CD8-positive, alpha-beta T cell (primary cell): ENCODE measurements at regions of chr19 and their contacts with region 1.

Region 1: GRCh38 chr19:45643024-45643926 is 4.1 kb upstream of the EML2 start:
- DNase-seq: peak; percentile 80 to 95 (median 88)
- ATAC-seq: peak; percentile 32
- H3K4me3 ChIP-seq: peak overlapping the region in 1 of 2 experiments; percentile 53
- H3K4me3 Mint-ChIP-seq: peak overlapping the region; percentile 53
- H3K27ac ChIP-seq: peak overlapping the region in 1 of 2 experiments; percentile 93
- H3K27ac Mint-ChIP-seq: peak overlapping the region; percentile 75
- H3K4me1 ChIP-seq: peaks cover 46% of the 10 kb centered on the region
- H3K4me1 Mint-ChIP-seq: peaks cover 43% of the 10 kb centered on the region
- H3K27me3 ChIP-seq: no peaks in the 10 kb centered on the region
- H3K27me3 Mint-ChIP-seq: peaks cover 3% of the 10 kb centered on the region
- CTCF ChIP-seq: peak; percentile 96

Region 2: DNA sequence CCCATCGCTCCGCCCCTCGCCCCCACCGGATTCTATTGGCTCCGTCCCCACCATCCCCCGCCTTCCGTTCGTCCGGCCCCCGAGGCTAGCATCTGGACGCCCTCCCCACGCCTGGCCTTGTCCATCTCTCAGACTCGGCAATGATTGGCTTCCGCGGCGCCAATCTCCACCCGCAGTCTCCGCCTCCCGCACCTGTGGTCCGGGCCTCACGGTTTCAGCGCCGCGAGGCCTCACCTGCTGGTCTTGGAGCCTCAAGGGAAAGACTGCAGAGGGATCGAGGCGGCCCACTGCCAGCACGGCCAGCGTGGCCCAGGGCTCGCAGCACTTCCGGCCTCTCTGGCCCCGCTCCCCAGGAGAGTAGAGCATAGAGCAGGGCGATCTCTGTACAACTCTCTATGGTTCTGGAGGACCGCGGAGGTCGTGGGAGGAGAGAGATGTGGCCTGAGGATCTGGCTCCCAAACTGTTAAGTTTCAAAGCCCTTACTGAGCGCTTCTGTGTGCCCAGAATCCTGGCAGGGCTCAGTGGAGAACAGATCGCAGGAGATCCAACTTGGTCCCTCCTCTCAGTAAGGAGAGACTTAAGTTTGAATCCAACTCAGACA is 219.6 kb before region 1 on chr19 and contains the start of gene ERCC1:
- CTCF ChIA-PET with region 1: no interaction called
- POLR2A ChIA-PET with region 1: interaction called, 3 read pairs
- intact Hi-C with region 1: loop called in 1 of 2 experiments (anchors 1 kb)
- DNase-seq: peak in 6 of 9 experiments; percentile 35 to 84 (median 48)
- ATAC-seq: peak; percentile 57
- H3K4me3 ChIP-seq: peak within 1 kb of the TSS; percentile 72 to 95
- H3K4me3 Mint-ChIP-seq: peak within 1 kb of the TSS; percentile 93
- H3K27ac ChIP-seq: peak within 1 kb of the TSS; percentile 48 to 88
- H3K27ac Mint-ChIP-seq: peak within 1 kb of the TSS; percentile 90
- H3K4me1 ChIP-seq: peaks cover 32% of the 10 kb centered on the region
- H3K4me1 Mint-ChIP-seq: peaks cover 55% of the 10 kb centered on the region
- H3K27me3 ChIP-seq: no peaks in the 10 kb centered on the region
- H3K27me3 Mint-ChIP-seq: peaks cover 2% of the 10 kb centered on the region
- CTCF ChIP-seq: no peak
- total RNA-seq, gene ERCC1: 28.7 to 31.5 TPM

Region 3: DNA sequence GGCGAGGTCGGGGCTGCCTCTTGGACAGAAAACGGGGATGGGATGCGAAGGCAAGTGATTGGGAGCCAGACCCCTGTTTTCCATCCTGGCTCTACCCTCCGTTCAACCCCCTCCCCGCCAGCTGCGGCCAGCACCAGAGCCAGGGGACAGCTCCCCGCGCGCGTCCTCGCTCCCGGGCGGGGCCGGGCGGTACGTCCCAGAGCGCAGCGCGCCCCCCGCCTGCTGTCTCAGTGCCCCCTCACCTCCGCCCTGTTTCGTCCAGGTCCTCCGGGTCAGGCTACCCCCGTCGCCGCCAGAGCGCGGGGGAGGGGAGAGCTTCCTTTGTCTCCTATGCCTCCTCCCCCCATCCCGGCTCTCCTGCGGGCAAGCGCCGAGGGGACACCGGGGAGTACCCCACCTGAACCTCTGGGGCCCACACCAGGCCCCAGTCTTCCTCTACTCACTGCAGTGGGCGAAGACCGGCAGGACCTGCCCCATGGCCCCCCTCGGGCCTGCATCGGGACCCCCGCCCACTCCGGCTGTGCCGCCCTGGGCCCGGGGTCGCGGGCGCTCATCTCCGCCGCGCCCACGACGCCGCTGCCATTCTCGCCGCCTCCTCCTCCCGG is 146.8 kb before region 1 on chr19:
- CTCF ChIA-PET with region 1: interaction called, 22 read pairs
- POLR2A ChIA-PET with region 1: interaction called, 4 read pairs
- intact Hi-C with region 1: loop called in 1 of 2 experiments (anchors 2 kb)
- DNase-seq: peak in 6 of 9 experiments; percentile 37 to 68 (median 58)
- ATAC-seq: peak; percentile 16
- H3K4me3 ChIP-seq: peak overlapping the region; percentile 57 to 75
- H3K4me3 Mint-ChIP-seq: peak overlapping the region; percentile 74
- H3K27ac ChIP-seq: no peak overlapping the region
- H3K27ac Mint-ChIP-seq: no peak overlapping the region
- H3K4me1 ChIP-seq: peaks cover 45% of the 10 kb centered on the region
- H3K4me1 Mint-ChIP-seq: peaks cover 37% of the 10 kb centered on the region
- H3K27me3 ChIP-seq: peaks cover 0 to 4% of the 10 kb centered on the region in 2 experiments
- H3K27me3 Mint-ChIP-seq: peaks cover 21% of the 10 kb centered on the region
- CTCF ChIP-seq: no peak

Region 4: GRCh38 chr19:45564131-45564780 is 79.0 kb before region 1 on chr19:
- CTCF ChIA-PET with region 1: no interaction called
- POLR2A ChIA-PET with region 1: no interaction called
- intact Hi-C with region 1: no loop called
- DNase-seq: peak in 1 of 9 experiments; percentile 37
- ATAC-seq: no peak
- H3K4me3 ChIP-seq: peak overlapping the region in 1 of 2 experiments; percentile 20
- H3K4me3 Mint-ChIP-seq: peak overlapping the region; percentile 37
- H3K27ac ChIP-seq: peak overlapping the region; percentile 24 to 61
- H3K27ac Mint-ChIP-seq: peak overlapping the region; percentile 85
- H3K4me1 ChIP-seq: peaks cover 46% of the 10 kb centered on the region
- H3K4me1 Mint-ChIP-seq: peaks cover 40% of the 10 kb centered on the region
- H3K27me3 ChIP-seq: no peaks in the 10 kb centered on the region
- H3K27me3 Mint-ChIP-seq: no peaks in the 10 kb centered on the region
- CTCF ChIP-seq: no peak

Region 5: GRCh38 chr19:45584332-45585157 is 58.7 kb before region 1 on chr19 and contains the start of gene OPA3:
- CTCF ChIA-PET with region 1: interaction called, 11 read pairs
- POLR2A ChIA-PET with region 1: interaction called, 6 read pairs
- intact Hi-C with region 1: loop called in 1 of 2 experiments (anchors 1 kb)
- DNase-seq: peak; percentile 97 to 100 (median 99)
- ATAC-seq: peak; percentile 86
- H3K4me3 ChIP-seq: peak within 1 kb of the TSS; percentile 80 to 86
- H3K4me3 Mint-ChIP-seq: peak within 1 kb of the TSS; percentile 96
- H3K27ac ChIP-seq: peak within 1 kb of the TSS; percentile 95 to 99
- H3K27ac Mint-ChIP-seq: peak within 1 kb of the TSS; percentile 99
- H3K4me1 ChIP-seq: peaks cover 6% of the 10 kb centered on the region
- H3K4me1 Mint-ChIP-seq: peaks cover 19% of the 10 kb centered on the region
- H3K27me3 ChIP-seq: no peaks in the 10 kb centered on the region
- H3K27me3 Mint-ChIP-seq: peaks cover 7% of the 10 kb centered on the region
- CTCF ChIP-seq: no peak
- total RNA-seq, gene OPA3: 5.6 to 5.7 TPM

Region 6: GRCh38 chr19:45607071-45608029 is 35.9 kb before region 1 on chr19:
- CTCF ChIA-PET with region 1: interaction called, 105 read pairs
- POLR2A ChIA-PET with region 1: interaction called, 3 read pairs
- intact Hi-C with region 1: loop called (anchors 1 kb)
- DNase-seq: peak in 7 of 9 experiments; percentile 17 to 71 (median 55)
- ATAC-seq: peak; percentile 46
- H3K4me3 ChIP-seq: no peak overlapping the region
- H3K4me3 Mint-ChIP-seq: no peak overlapping the region
- H3K27ac ChIP-seq: peak overlapping the region in 1 of 2 experiments; percentile 0
- H3K27ac Mint-ChIP-seq: no peak overlapping the region
- H3K4me1 ChIP-seq: no peaks in the 10 kb centered on the region
- H3K4me1 Mint-ChIP-seq: peaks cover 9% of the 10 kb centered on the region
- H3K27me3 ChIP-seq: peaks cover 4 to 11% of the 10 kb centered on the region in 2 experiments
- H3K27me3 Mint-ChIP-seq: peaks cover 8% of the 10 kb centered on the region
- CTCF ChIP-seq: peak; percentile 84

Region 7: DNA sequence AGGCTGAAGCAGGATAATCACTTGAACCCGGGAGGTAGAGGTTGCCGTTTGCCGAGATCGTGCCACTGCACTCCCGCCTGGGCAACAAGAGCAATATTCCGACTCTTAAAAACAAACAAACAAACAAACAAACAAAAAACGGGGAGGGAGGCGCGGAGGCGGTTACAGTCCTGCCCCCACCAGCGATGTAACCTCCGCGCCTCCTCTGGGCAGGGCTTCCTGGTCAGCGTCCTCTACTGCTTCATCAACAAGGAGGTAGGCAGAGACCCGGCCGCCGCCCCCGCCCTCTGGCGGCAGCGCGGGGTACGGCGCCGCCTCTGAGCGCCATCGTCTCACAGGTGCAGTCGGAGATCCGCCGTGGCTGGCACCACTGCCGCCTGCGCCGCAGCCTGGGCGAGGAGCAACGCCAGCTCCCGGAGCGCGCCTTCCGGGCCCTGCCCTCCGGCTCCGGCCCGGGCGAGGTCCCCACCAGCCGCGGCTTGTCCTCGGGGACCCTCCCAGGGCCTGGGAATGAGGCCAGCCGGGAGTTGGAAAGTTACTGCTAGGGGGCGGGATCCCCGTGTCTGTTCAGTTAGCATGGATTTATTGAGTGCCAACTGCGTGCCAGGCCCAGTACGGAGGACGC is 38.2 kb after region 1 on chr19:
- CTCF ChIA-PET with region 1: interaction called, 24 read pairs
- POLR2A ChIA-PET with region 1: no interaction called
- intact Hi-C with region 1: loop called (anchors 1 to 2 kb)
- DNase-seq: peak; percentile 74 to 94 (median 85)
- ATAC-seq: peak; percentile 76
- H3K4me3 ChIP-seq: peak overlapping the region; percentile 34 to 50
- H3K4me3 Mint-ChIP-seq: peak overlapping the region; percentile 73
- H3K27ac ChIP-seq: no peak overlapping the region
- H3K27ac Mint-ChIP-seq: peak overlapping the region; percentile 49
- H3K4me1 ChIP-seq: peaks cover 17% of the 10 kb centered on the region
- H3K4me1 Mint-ChIP-seq: peaks cover 20% of the 10 kb centered on the region
- H3K27me3 ChIP-seq: peaks cover 0 to 4% of the 10 kb centered on the region in 2 experiments
- H3K27me3 Mint-ChIP-seq: no peaks in the 10 kb centered on the region
- CTCF ChIP-seq: peak; percentile 97

Region 8: GRCh38 chr19:46990991-46991676 is 1347.9 kb after region 1 on chr19:
- CTCF ChIA-PET with region 1: no interaction called
- POLR2A ChIA-PET with region 1: no interaction called
- intact Hi-C with region 1: no loop called
- DNase-seq: peak in 8 of 9 experiments; percentile 37 to 80 (median 65)
- ATAC-seq: peak; percentile 73
- H3K4me3 ChIP-seq: no peak overlapping the region
- H3K4me3 Mint-ChIP-seq: no peak overlapping the region
- H3K27ac ChIP-seq: no peak overlapping the region
- H3K27ac Mint-ChIP-seq: no peak overlapping the region
- H3K4me1 ChIP-seq: peaks cover 10% of the 10 kb centered on the region
- H3K4me1 Mint-ChIP-seq: peaks cover 17% of the 10 kb centered on the region
- H3K27me3 ChIP-seq: no peaks in the 10 kb centered on the region
- H3K27me3 Mint-ChIP-seq: no peaks in the 10 kb centered on the region
- CTCF ChIP-seq: peak; percentile 63